ENCODE measurements at regions of chr19 and their contacts with region 1.

Region 1: DNA sequence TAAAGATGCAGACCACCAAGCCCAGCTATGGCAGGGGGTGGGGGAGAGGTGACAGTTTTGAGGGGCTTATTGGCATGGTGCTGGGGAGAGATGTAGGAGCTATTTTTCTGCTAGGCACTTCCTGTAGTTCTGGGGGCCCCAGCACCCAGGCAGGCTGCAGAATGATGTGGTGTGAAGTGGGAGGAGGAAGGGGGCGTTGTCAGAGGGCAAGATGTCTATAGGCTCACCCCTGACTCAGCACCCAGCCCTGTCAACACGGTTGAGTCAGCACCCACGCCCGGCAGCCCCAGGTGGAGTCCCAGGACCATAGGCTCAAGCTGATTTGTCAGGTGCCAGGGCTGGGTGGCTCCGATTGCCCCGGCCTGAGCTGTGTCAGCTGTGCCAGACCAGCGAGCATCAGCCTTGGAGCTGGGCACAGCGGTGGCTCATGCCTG is 5.8 kb downstream of the KLF2 start:
- DNase-seq: peak; percentile 76 to 96 (median 92)
- ATAC-seq: peak; percentile 74
- H3K4me3 ChIP-seq: no peak overlapping the region
- H3K4me3 Mint-ChIP-seq: peak overlapping the region; percentile 89 to 99 (median 97)
- H3K27ac ChIP-seq: peak overlapping the region; percentile 98
- H3K27ac Mint-ChIP-seq: peak overlapping the region; percentile 95 to 100 (median 98)
- H3K4me1 ChIP-seq: peaks cover 21 to 37% of the 10 kb centered on the region in 2 donors
- H3K4me1 Mint-ChIP-seq: peaks cover 17 to 62% (median 44%) of the 10 kb centered on the region in 7 donors
- H3K27me3 ChIP-seq: no peaks in the 10 kb centered on the region
- H3K27me3 Mint-ChIP-seq: peaks cover 0 to 36% (median 0%) of the 10 kb centered on the region in 5 donors

Region 2: GRCh38 chr19:16216744-16217670 is 113.4 kb before region 1 on chr19:
- CTCF ChIA-PET with region 1: no interaction called
- POLR2A ChIA-PET with region 1: interaction called, 13 read pairs
- intact Hi-C with region 1: no loop called
- DNase-seq: peak in 7 of 9 donors; percentile 36 to 55 (median 50)
- ATAC-seq: peak; percentile 76
- H3K4me3 ChIP-seq: peak overlapping the region; percentile 34
- H3K4me3 Mint-ChIP-seq: peak overlapping the region; percentile 33 to 85 (median 78)
- H3K27ac ChIP-seq: peak overlapping the region; percentile 57
- H3K27ac Mint-ChIP-seq: peak overlapping the region; percentile 52 to 97 (median 92)
- H3K4me1 ChIP-seq: peaks cover 0 to 44% of the 10 kb centered on the region in 2 donors
- H3K4me1 Mint-ChIP-seq: peaks cover 29 to 68% (median 56%) of the 10 kb centered on the region in 7 donors
- H3K27me3 ChIP-seq: no peaks in the 10 kb centered on the region
- H3K27me3 Mint-ChIP-seq: no peaks in the 10 kb centered on the region

Region 3: DNA sequence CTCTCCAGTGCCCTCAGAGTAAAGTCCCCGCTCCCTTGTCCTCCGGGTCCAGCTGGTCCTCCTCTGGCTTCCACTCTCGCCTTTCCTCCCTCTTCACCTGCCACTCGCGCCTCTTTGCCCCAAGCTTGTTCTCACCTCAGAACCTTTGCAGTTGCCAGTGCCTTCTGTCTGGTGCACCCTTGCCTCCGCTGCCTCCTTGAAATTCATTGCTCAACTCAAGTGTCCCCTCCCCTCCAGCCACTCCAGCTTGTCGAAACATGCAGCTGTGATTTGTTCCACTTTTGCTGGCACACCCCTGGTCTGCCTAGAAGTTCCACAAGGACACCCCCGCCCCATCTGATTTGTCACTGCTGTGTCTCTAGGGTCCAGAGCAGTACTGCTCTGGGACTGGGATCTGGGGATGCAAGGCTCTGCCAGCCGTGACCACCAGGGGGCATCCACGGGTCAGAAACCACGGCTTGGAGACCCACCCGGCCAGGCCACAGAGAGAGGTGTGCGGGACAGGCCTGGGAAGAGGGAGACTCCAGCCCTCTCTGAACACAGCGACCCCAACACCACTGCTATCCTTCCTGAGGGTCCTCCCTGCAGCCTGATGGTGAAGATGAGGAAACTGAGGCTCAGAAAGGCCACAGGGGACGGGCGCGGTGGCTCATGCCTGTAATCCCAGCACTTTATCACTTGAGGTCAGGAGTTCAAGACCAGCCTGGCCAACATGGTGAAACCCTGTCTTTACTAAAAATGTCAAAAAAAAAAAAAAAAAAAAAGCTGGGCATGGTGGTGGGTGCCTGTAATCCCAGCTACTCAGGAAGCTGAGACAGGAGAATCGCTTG is 82.8 kb before region 1 on chr19:
- CTCF ChIA-PET with region 1: interaction called, 14 read pairs
- POLR2A ChIA-PET with region 1: interaction called, 101 read pairs
- intact Hi-C with region 1: loop called in 1 of 2 experiments (anchors 5 kb)
- DNase-seq: peak; percentile 60 to 89 (median 77)
- ATAC-seq: peak; percentile 95
- H3K4me3 ChIP-seq: no peak overlapping the region
- H3K4me3 Mint-ChIP-seq: peak overlapping the region; percentile 22 to 71 (median 56)
- H3K27ac ChIP-seq: no peak overlapping the region
- H3K27ac Mint-ChIP-seq: peak overlapping the region; percentile 48 to 94 (median 84)
- H3K4me1 ChIP-seq: peaks cover 15 to 24% of the 10 kb centered on the region in 2 donors
- H3K4me1 Mint-ChIP-seq: peaks cover 17 to 38% (median 36%) of the 10 kb centered on the region in 7 donors
- H3K27me3 ChIP-seq: no peaks in the 10 kb centered on the region
- H3K27me3 Mint-ChIP-seq: peaks cover 0 to 7% (median 0%) of the 10 kb centered on the region in 5 donors

Region 4: GRCh38 chr19:16283210-16284061 is 46.9 kb before region 1 on chr19:
- CTCF ChIA-PET with region 1: no interaction called
- POLR2A ChIA-PET with region 1: interaction called, 19 read pairs
- intact Hi-C with region 1: no loop called
- DNase-seq: peak in 8 of 9 donors; percentile 31 to 77 (median 68)
- ATAC-seq: peak; percentile 75
- H3K4me3 ChIP-seq: peak overlapping the region; percentile 53
- H3K4me3 Mint-ChIP-seq: peak overlapping the region; percentile 61 to 86 (median 84)
- H3K27ac ChIP-seq: peak overlapping the region; percentile 75
- H3K27ac Mint-ChIP-seq: peak overlapping the region; percentile 81 to 98 (median 94)
- H3K4me1 ChIP-seq: peaks cover 9 to 34% of the 10 kb centered on the region in 2 donors
- H3K4me1 Mint-ChIP-seq: peaks cover 31 to 60% (median 51%) of the 10 kb centered on the region in 7 donors
- H3K27me3 ChIP-seq: no peaks in the 10 kb centered on the region
- H3K27me3 Mint-ChIP-seq: peaks cover 0 to 48% (median 0%) of the 10 kb centered on the region in 5 donors

Region 5: GRCh38 chr19:16376649-16377048 is 46.3 kb after region 1 on chr19:
- CTCF ChIA-PET with region 1: interaction called, 159 read pairs
- POLR2A ChIA-PET with region 1: interaction called, 4,370 read pairs
- intact Hi-C with region 1: loop called in 1 of 2 experiments (anchors 1 kb)
- DNase-seq: peak in 6 of 9 donors; percentile 30 to 55 (median 42)
- ATAC-seq: peak; percentile 49
- H3K4me3 ChIP-seq: no peak overlapping the region
- H3K4me3 Mint-ChIP-seq: peak overlapping the region in 4 of 10 donors; percentile 32 to 82 (median 69)
- H3K27ac ChIP-seq: peak overlapping the region; percentile 64
- H3K27ac Mint-ChIP-seq: peak overlapping the region in 4 of 9 donors; percentile 76 to 99 (median 96)
- H3K4me1 ChIP-seq: peaks cover 75 to 91% of the 10 kb centered on the region in 2 donors
- H3K4me1 Mint-ChIP-seq: peaks cover 16 to 90% (median 63%) of the 10 kb centered on the region in 7 donors
- H3K27me3 ChIP-seq: no peaks in the 10 kb centered on the region
- H3K27me3 Mint-ChIP-seq: peaks cover 0 to 2% (median 0%) of the 10 kb centered on the region in 5 donors

Region 6: DNA sequence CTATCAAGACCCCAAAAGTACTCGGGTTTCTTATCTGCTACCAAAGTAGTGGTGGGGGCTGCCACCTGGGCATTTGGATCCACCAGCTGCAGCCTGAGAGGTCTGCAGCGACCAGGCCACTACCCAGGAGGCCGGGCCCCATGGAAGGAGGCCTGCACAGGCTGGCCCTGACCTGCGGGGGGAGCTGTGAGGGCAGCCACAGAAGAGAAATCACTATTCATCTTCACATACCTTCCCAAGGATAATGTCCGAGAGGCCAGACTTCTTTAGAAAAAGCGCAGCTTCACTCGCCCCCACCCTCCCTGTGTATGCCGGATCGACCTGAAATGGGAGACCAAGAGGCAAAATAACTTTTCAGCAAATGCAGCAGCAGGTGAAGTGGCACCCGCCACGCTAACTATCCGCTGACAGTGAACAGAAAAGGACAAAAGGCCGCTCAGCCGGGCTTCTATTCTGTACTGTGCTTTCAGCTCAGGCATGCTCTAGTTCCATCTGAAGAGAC is 111.3 kb after region 1 on chr19:
- CTCF ChIA-PET with region 1: no interaction called
- POLR2A ChIA-PET with region 1: no interaction called
- intact Hi-C with region 1: no loop called
- DNase-seq: no peak
- ATAC-seq: no peak
- H3K4me3 ChIP-seq: no peak overlapping the region
- H3K4me3 Mint-ChIP-seq: no peak overlapping the region
- H3K27ac ChIP-seq: no peak overlapping the region
- H3K27ac Mint-ChIP-seq: no peak overlapping the region
- H3K4me1 ChIP-seq: peaks cover 0 to 7% of the 10 kb centered on the region in 2 donors
- H3K4me1 Mint-ChIP-seq: peaks cover 11 to 54% (median 32%) of the 10 kb centered on the region in 7 donors
- H3K27me3 ChIP-seq: no peaks in the 10 kb centered on the region
- H3K27me3 Mint-ChIP-seq: no peaks in the 10 kb centered on the region

Region 7: DNA sequence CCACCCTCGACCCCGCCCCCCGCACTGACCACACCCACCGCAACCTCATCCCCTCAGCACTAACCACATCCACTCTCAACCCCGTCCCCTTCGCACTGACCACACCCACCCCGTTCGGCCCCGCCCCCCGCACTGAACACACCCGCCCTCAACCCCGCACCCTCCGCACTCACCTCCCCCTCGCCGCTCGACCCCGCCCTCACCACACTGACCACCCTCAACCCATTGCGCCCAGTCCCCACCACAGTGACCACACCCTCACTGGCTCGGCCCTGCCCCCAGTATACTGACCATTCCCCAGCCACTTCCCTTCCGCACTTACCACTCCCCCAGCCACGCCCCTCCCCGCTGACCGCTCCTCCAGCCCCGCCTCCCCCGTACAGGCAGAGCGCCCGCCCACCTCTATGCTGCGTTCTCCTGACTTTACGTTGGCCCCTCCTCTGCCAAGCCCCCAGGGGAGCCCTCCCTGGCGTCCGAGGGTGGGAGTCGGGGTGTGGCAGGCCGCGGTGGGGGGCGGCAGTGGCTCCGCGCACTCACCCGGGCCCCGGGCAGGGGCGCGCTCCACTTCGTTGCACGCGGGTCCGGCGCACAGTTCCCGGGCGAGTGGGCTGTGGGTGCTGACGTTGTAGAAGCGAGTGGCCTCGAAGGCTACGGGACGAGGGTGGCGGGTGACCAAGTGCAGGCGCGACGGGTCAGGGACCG is 566.9 kb after region 1 on chr19:
- CTCF ChIA-PET with region 1: no interaction called
- POLR2A ChIA-PET with region 1: no interaction called
- intact Hi-C with region 1: no loop called
- DNase-seq: peak in 7 of 9 donors; percentile 9 to 77 (median 32)
- ATAC-seq: peak; percentile 80
- H3K4me3 ChIP-seq: peak overlapping the region; percentile 50
- H3K4me3 Mint-ChIP-seq: peak overlapping the region in 9 of 10 donors; percentile 43 to 81 (median 76)
- H3K27ac ChIP-seq: no peak overlapping the region
- H3K27ac Mint-ChIP-seq: peak overlapping the region in 2 of 9 donors; percentile 47 to 77
- H3K4me1 ChIP-seq: peaks cover 0 to 5% of the 10 kb centered on the region in 2 donors
- H3K4me1 Mint-ChIP-seq: peaks cover 13 to 36% (median 22%) of the 10 kb centered on the region in 7 donors
- H3K27me3 ChIP-seq: no peaks in the 10 kb centered on the region
- H3K27me3 Mint-ChIP-seq: peaks cover 6 to 50% (median 19%) of the 10 kb centered on the region in 5 donors